Posterior vena cava (tissue), 2 donors: ENCODE measurements at regions of chr2 and their contacts with region 1.

Region 1: DNA sequence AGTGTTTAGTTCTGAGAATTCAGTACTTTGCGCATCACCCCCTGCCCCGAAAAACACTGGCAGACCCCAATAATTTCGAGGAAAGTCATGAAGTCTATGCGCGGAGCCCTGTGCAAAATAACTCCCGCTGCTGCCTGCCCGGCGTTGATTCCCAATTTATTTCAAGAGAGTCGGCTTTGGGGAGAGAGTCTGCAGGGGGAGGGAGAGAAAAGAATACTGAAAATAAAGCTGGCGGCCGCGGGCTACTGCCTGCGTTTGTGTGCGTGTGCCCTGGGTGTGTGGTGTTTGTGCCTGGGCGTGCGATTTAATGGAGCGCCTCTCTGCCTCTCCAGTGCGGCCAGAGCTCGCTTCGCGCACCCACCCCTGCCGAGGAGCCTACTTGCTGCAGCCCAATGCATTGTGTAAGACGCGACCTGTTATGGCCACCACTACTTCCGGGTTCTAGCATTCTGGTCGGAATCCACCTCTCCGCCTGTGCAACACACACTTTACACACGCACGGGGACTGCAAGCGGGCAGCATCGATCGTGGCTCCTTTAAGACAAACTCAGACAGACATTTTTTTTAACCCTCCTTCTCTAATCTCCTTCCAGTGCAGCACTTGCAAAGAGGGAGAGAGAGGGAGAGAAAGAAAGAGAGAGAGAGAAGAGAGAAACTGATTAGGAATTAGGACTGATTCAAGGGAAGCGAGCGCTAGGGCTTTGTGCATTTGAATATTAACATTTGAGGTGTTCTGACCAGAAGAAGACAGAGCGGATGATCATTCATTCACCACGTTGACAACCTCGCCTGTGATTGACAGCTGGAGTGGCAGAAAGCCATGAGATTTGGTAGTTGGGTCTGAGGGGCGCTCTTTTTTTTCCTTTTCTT is at the start of gene MEIS1:
- DNase-seq: peak; percentile 96
- total RNA-seq, gene MEIS1: 63.4 to 96.9 TPM

Region 2: DNA sequence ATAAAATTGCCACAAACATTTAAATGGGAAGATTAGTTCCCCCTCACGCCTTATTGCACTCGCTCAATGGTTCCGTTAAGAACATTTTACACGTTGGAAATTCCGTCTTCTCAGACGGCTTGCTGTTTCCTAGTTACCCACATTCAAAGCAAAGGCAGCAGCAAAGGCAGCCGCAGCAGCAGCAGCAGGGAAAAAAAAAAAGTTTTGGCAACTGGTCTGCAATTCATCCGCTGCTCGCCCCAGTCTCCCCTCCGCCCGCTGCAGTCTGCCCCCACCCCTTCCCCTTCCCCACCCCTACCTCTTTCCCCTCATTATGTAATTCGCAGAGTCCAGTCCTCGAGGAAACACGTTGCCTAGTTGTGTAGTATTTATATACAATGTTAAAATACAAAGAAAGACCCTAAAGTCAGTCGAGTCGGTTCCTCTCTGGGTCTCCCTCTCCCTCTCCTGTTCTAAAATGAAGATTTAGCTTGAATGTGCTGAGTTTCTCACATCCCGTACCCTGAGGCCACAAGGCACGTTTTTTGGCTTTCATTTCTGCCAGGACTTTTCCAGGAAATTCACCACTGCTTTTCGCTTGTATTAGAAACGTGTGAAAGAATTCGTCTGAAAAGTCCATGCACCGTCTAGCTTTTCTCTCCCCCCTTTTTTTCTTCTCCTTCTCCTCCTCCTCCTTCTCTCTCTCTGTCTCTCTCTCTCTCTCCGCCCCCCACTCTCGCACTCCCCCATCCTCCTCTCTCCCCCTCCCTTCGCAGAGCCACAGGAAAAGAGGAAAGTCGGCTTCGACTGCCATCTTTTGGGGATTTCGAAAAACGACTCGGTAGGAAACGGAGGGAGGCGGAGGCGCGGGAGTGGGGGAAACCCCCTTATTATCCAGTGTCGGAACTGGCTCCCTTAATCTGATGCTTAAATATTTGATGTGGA is 140.0 kb after region 1 on chr2:
- intact Hi-C with region 1: loop called in 1 of 2 experiments (anchors 2 kb)
- DNase-seq: peak; percentile 89

Region 3: GRCh38 chr2:66851449-66851872 is 416.5 kb after region 1 on chr2:
- intact Hi-C with region 1: loop called in 1 of 2 experiments (anchors 5 kb)
- DNase-seq: no peak

Region 4: GRCh38 chr2:67259581-67260342 is 824.8 kb after region 1 on chr2:
- intact Hi-C with region 1: loop called in 1 of 2 experiments (anchors 5 kb)
- DNase-seq: no peak

Region 5: GRCh38 chr2:67397143-67397986 is 962.5 kb after region 1 on chr2 and contains the start of gene ETAA1:
- intact Hi-C with region 1: loop called in 1 of 2 experiments (anchors 10 kb)
- DNase-seq: peak; percentile 98
- total RNA-seq, gene ETAA1: 12.5 to 12.6 TPM

Region 6: DNA sequence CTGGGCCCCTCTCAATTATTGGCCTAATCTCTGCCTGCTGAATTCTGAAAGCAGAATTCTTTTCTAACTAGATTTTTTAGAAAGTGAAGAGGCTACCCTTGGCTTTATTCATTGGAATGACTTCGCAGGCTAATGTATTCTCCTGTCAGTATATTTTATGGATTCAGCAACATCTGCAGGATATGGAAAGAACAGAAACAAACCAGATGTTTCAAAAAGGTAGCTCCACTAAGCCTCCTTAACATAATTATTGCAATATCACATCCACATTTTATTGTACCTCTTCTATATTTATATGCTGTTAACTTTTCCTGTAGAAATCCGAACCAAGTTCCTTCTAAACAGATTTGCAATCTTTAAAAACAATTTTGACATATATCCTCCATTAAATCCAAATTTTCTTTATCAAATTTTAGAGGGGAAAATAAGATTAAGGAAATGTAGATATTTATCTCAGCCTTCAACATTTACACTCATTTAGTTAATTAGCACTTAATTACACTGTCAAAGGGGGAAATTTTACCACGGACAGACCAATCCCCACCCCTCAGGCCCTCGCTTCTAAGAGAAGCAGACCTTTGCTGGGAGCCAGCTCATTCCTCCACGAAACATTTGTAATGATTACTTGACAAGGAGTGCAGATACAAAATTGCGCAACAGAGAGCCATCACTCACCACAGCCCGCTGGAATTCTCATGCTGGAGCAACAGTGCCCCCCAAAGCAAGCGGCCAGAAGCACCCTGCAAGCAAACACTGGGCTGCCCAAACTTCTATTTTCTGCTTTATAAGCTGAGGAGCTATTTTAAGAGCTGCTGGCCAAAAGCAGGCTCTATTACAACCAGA is 1215.6 kb after region 1 on chr2:
- intact Hi-C with region 1: loop called in 1 of 2 experiments (anchors 5 kb)
- DNase-seq: peak; percentile 93

Region 7: DNA sequence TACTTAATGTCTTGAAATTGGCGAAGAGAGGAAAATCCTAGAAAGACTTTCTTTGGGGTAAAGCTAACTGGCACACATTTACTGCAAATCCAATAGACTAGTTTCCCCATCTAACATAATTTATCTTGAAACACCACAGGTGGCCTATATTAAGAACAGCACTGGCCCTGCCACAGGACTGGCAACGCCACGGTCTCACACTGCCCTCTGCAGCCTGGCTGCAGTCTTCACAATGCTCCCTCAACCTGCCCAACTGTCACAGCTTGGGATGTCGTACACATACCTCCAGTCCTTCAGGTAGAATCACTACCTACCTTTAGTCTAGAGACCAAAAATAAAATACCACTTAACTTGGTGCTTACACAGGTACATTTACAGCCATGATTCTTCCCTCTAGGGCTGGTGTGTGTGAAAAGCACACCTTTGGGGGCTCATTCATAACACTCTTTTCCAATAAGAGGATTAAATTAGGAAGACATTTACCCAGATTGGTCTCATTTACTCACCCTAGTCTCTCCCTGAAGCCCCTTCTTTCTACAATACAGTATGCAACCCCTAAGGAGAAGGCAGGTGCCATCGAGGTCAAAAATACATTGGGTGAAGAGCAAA is 1405.7 kb after region 1 on chr2:
- intact Hi-C with region 1: loop called in 1 of 2 experiments (anchors 10 kb)
- DNase-seq: peak; percentile 88